Heart right ventricle (tissue), 16 donors: ENCODE measurements at regions of chr6 and their contacts with region 1.

Region 1: GRCh38 chr6:52577022-52577777 is at the start of gene TRAM2:
- DNase-seq: peak; percentile 86 to 91
- ATAC-seq: peak; percentile 75 to 94 (median 88)
- H3K4me3 ChIP-seq: peak within 1 kb of the TSS; percentile 71 to 97 (median 86)
- H3K27ac ChIP-seq: peak within 1 kb of the TSS; percentile 96 to 100 (median 99)
- H3K4me1 ChIP-seq: peaks cover 0 to 56% (median 51%) of the 10 kb centered on the region in 9 donors
- H3K27me3 ChIP-seq: no peaks in the 10 kb centered on the region
- CTCF ChIP-seq: peak in 6 of 9 donors; percentile 7 to 44 (median 14)
- total RNA-seq, gene TRAM2: 7.9 to 17.3 (median 11.0) TPM

Region 2: GRCh38 chr6:52503848-52504781 is 73.1 kb before region 1 on chr6:
- intact Hi-C with region 1: loop called in 6 of 10 experiments (anchors 5 kb)
- DNase-seq: peak; percentile 88 to 91
- ATAC-seq: peak; percentile 79 to 92 (median 88)
- H3K4me3 ChIP-seq: peak overlapping the region in 1 of 10 donors; percentile 4
- H3K27ac ChIP-seq: peak overlapping the region; percentile 50 to 91 (median 80)
- H3K4me1 ChIP-seq: peaks cover 19 to 79% (median 48%) of the 10 kb centered on the region in 9 donors
- H3K27me3 ChIP-seq: no peaks in the 10 kb centered on the region
- CTCF ChIP-seq: no peak

Region 3: DNA sequence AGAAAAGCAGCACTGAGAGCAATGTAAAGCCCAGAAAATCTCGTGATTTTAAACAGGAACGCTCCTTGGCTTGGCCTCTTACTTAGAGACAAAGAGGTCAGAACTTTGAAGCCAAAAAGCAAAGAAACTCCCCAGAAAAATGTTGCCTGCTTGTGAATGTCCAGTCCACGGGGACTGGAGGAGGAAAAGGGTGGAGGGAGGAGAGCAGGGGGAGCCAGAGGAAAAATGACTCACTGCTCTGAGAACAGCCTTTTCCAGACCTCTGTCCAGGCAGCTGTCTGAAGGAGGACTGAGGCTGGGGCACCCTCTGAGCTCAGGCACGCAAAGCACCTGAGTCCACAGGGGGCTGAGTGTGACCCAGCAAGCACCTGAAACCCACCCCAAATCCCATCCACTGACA is 65.0 kb before region 1 on chr6:
- intact Hi-C with region 1: loop called in 8 of 10 experiments (anchors 2 to 10 kb)
- DNase-seq: peak; percentile 37 to 77
- ATAC-seq: peak; percentile 89 to 96 (median 94)
- H3K4me3 ChIP-seq: no peak overlapping the region
- H3K27ac ChIP-seq: peak overlapping the region; percentile 44 to 93 (median 83)
- H3K4me1 ChIP-seq: peaks cover 13 to 91% (median 41%) of the 10 kb centered on the region in 9 donors
- H3K27me3 ChIP-seq: no peaks in the 10 kb centered on the region
- CTCF ChIP-seq: peak in 1 of 9 donors; percentile 8

Region 4: DNA sequence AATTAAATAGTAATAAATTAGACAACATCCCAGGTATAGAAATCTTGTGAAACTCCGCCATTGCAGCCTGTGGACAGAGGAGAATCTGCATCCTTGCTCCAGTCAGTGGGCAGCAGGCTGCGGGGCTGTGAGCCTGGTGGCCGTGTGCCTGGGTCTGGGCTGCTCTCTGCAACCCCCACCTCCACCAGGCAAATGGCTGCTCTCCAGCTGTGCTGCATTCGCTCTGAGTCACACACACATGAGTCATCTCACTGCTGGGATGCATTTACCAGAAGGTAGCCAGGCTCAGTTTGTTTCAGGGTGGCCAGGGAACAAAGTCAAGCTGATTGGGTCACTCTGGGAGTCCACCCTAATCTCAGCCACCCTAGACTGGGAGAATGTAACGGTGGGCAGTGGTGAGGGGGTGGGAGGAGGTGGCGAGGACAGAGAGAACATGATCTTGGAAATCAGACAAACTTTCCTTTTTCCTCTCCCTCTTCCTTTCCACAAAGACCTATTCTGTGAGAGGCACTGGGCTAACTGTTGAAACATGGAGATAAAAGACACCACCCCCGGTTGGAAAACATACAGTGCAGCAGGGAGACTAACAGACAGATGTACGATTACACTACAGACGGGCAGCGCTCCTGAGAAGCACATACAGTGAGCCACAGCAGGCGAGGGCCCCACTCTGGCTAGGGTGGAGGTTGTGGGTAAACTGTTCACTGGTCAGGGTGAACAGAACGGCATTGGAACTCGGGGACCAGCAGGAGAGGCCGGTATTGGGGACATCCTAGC is 59.5 kb before region 1 on chr6:
- intact Hi-C with region 1: loop called in 8 of 10 experiments (anchors 2 to 10 kb)
- DNase-seq: peak; percentile 81 to 91
- ATAC-seq: peak; percentile 93 to 97 (median 94)
- H3K4me3 ChIP-seq: peak overlapping the region in 1 of 10 donors; percentile 14
- H3K27ac ChIP-seq: peak overlapping the region; percentile 79 to 94 (median 89)
- H3K4me1 ChIP-seq: peaks cover 26 to 87% (median 47%) of the 10 kb centered on the region in 9 donors
- H3K27me3 ChIP-seq: no peaks in the 10 kb centered on the region
- CTCF ChIP-seq: no peak

Region 5: GRCh38 chr6:52664186-52664990 is 87.2 kb after region 1 on chr6:
- intact Hi-C with region 1: no loop called
- DNase-seq: peak; percentile 91 to 92
- ATAC-seq: peak; percentile 97 to 99 (median 99)
- H3K4me3 ChIP-seq: peak overlapping the region; percentile 24 to 83 (median 71)
- H3K27ac ChIP-seq: peak overlapping the region in 9 of 10 donors; percentile 43 to 80 (median 74)
- H3K4me1 ChIP-seq: peaks cover 0 to 21% (median 8%) of the 10 kb centered on the region in 9 donors
- H3K27me3 ChIP-seq: peaks cover 0 to 19% (median 0%) of the 10 kb centered on the region in 7 donors
- CTCF ChIP-seq: no peak

Region 6: GRCh38 chr6:53074347-53074746 is 497.1 kb after region 1 on chr6:
- intact Hi-C with region 1: no loop called
- DNase-seq: no peak
- ATAC-seq: no peak
- H3K4me3 ChIP-seq: no peak overlapping the region
- H3K27ac ChIP-seq: no peak overlapping the region
- H3K4me1 ChIP-seq: peaks cover 0 to 8% (median 0%) of the 10 kb centered on the region in 9 donors
- H3K27me3 ChIP-seq: no peaks in the 10 kb centered on the region
- CTCF ChIP-seq: no peak

Region 7: GRCh38 chr6:53294095-53294494 is 716.9 kb after region 1 on chr6:
- intact Hi-C with region 1: no loop called
- DNase-seq: no peak
- ATAC-seq: peak in 3 of 8 donors; percentile 31 to 56 (median 45)
- H3K4me3 ChIP-seq: no peak overlapping the region
- H3K27ac ChIP-seq: peak overlapping the region in 1 of 10 donors; percentile 5
- H3K4me1 ChIP-seq: peaks cover 0 to 68% (median 43%) of the 10 kb centered on the region in 9 donors
- H3K27me3 ChIP-seq: no peaks in the 10 kb centered on the region
- CTCF ChIP-seq: peak; percentile 22 to 68 (median 56)